Esophagus squamous epithelium (tissue), 5 donors: ENCODE measurements at regions of chr16 and their contacts with region 1.

Region 1: DNA sequence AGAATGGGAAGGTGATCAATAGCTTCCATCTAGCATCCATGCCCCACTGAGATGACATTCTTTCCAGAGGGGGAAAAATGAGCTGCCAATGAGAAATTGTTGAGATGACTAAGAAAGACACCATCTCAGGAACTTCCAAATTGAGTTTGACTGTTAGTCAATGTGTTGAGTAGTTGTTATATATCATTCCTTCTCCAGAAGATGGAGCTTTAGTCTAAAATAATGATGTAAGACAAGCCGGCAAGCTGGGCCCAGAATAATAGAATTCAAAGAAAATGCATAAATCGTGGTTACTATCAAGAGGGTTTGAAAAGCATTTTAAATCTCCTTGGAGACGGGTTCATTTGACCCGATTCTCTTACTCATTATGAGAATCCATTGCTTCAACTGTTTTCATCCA is 71.0 kb upstream of the ATF7IP2 start:
- DNase-seq: no peak
- H3K4me3 ChIP-seq: no peak overlapping the region
- H3K27ac ChIP-seq: no peak overlapping the region
- H3K4me1 ChIP-seq: peaks cover 0 to 2% (median 0%) of the 10 kb centered on the region in 3 donors
- H3K27me3 ChIP-seq: no peaks in the 10 kb centered on the region
- CTCF ChIP-seq: peak in 2 of 6 experiments; percentile 7 to 32
- POLR2A ChIP-seq: no peak

Region 2: DNA sequence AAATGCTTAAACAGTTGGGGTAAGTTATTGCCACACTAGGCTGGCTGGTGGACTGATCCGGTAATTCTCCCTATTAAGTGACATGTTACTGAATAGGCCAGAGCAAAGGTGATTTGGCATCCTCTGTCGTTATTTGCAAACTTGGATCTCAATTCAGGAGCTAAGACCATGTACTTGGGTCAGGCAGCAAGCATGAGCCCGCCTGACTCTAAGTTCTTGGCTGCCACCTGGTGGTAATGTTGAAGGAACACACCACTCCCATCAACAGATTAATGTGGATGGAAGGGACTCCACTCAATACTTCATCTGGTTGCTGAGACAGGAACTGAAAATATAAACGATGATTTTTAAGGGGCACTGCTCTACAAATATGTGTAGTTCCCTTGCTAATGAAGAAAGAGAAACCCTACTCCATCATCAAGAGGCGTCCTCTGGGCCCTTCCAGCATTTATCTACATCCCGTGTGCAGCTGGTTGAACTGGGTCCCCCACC is 194.8 kb after region 1 on chr16:
- intact Hi-C with region 1: loop called (anchors 10 kb)
- DNase-seq: no peak
- H3K4me3 ChIP-seq: no peak overlapping the region
- H3K27ac ChIP-seq: no peak overlapping the region
- H3K4me1 ChIP-seq: peaks cover 0 to 6% (median 0%) of the 10 kb centered on the region in 3 donors
- H3K27me3 ChIP-seq: no peaks in the 10 kb centered on the region
- CTCF ChIP-seq: peak; percentile 65 to 87 (median 82)
- POLR2A ChIP-seq: no peak